Panc1 (cell line): ENCODE measurements at regions of chrX and their contacts with region 1.

Region 1: GRCh38 chrX:49291615-49292337 is 11.7 kb upstream of the GAGE10 start:
- DNase-seq: peak; percentile 28
- ATAC-seq: peak; percentile 91
- H3K4me3 ChIP-seq: no peak overlapping the region
- H3K27ac ChIP-seq: no peak overlapping the region
- H3K4me1 ChIP-seq: no peaks in the 10 kb centered on the region
- H3K27me3 ChIP-seq: no peaks in the 10 kb centered on the region
- CTCF ChIP-seq: peak; percentile 85

Region 2: DNA sequence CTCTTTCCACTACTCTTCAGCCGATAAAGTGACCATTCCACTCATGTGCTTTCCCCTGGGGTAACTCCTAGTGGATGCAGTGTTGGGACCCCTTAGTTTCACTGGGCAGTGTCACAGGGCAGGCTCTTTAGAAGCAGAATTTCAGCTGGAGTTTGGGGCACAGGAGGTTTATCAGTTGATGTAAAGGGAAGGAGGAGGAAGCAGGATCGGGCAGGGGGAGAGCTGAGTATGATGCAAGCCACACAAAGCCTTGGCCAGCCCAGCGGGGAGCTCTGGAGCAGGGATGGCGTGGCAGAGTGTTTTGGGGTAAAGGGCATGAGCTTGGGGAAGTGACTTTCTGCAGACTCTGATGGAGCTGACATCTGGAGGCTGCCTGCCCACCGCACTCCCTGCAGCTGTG is 675.2 kb before region 1 on chrX:
- CTCF ChIA-PET with region 1: no interaction called
- POLR2A ChIA-PET with region 1: no interaction called
- in situ Hi-C with region 1: no loop called
- intact Hi-C with region 1: no loop called
- DNase-seq: no peak
- ATAC-seq: 0 out of 2 replicates have a peak, but pooled peaks have one; percentile 31
- H3K4me3 ChIP-seq: no peak overlapping the region
- H3K27ac ChIP-seq: no peak overlapping the region
- H3K4me1 ChIP-seq: no peaks in the 10 kb centered on the region
- H3K27me3 ChIP-seq: no peaks in the 10 kb centered on the region
- CTCF ChIP-seq: no peak

Region 3: GRCh38 chrX:49754233-49754857 is 462.6 kb after region 1 on chrX:
- CTCF ChIA-PET with region 1: interaction called, 6 read pairs
- POLR2A ChIA-PET with region 1: no interaction called
- in situ Hi-C with region 1: no loop called
- intact Hi-C with region 1: loop called (anchors 1 kb)
- DNase-seq: no peak
- ATAC-seq: peak; percentile 87; the same call in 1 of the 2 replicates
- H3K4me3 ChIP-seq: no peak overlapping the region
- H3K27ac ChIP-seq: no peak overlapping the region
- H3K4me1 ChIP-seq: no peaks in the 10 kb centered on the region
- H3K27me3 ChIP-seq: peaks cover 3% of the 10 kb centered on the region
- CTCF ChIP-seq: peak; percentile 91

Region 4: GRCh38 chrX:50827991-50828390 is 1536.2 kb after region 1 on chrX:
- CTCF ChIA-PET with region 1: no interaction called
- POLR2A ChIA-PET with region 1: no interaction called
- in situ Hi-C with region 1: no loop called
- intact Hi-C with region 1: no loop called
- DNase-seq: peak; percentile 45
- ATAC-seq: no peak
- H3K4me3 ChIP-seq: no peak overlapping the region
- H3K27ac ChIP-seq: no peak overlapping the region
- H3K4me1 ChIP-seq: no peaks in the 10 kb centered on the region
- H3K27me3 ChIP-seq: no peaks in the 10 kb centered on the region
- CTCF ChIP-seq: no peak